ENCODE measurements at regions of chr1 and their contacts with region 1.

Region 1: GRCh38 chr1:172638885-172639831 is 19.7 kb upstream of the FASLG start:
- DNase-seq: peak; percentile 25 to 81 (median 63)
- ATAC-seq: peak; percentile 73
- H3K4me3 ChIP-seq: peak overlapping the region in 1 of 2 experiments; percentile 16
- H3K4me3 Mint-ChIP-seq: peak overlapping the region; percentile 65
- H3K27ac ChIP-seq: peak overlapping the region; percentile 5 to 59
- H3K27ac Mint-ChIP-seq: peak overlapping the region; percentile 85
- H3K4me1 ChIP-seq: peaks cover 48% of the 10 kb centered on the region
- H3K4me1 Mint-ChIP-seq: peaks cover 69% of the 10 kb centered on the region
- H3K27me3 ChIP-seq: no peaks in the 10 kb centered on the region
- H3K27me3 Mint-ChIP-seq: no peaks in the 10 kb centered on the region
- CTCF ChIP-seq: no peak

Region 2: GRCh38 chr1:172609528-172609927 is 29.6 kb before region 1 on chr1:
- CTCF ChIA-PET with region 1: interaction called, 16 read pairs
- POLR2A ChIA-PET with region 1: interaction called, 4 read pairs
- intact Hi-C with region 1: no loop called
- DNase-seq: peak in 2 of 9 experiments; percentile 53 to 62
- ATAC-seq: peak; percentile 78
- H3K4me3 ChIP-seq: no peak overlapping the region
- H3K4me3 Mint-ChIP-seq: no peak overlapping the region
- H3K27ac ChIP-seq: no peak overlapping the region
- H3K27ac Mint-ChIP-seq: no peak overlapping the region
- H3K4me1 ChIP-seq: no peaks in the 10 kb centered on the region
- H3K4me1 Mint-ChIP-seq: peaks cover 4% of the 10 kb centered on the region
- H3K27me3 ChIP-seq: no peaks in the 10 kb centered on the region
- H3K27me3 Mint-ChIP-seq: no peaks in the 10 kb centered on the region
- CTCF ChIP-seq: peak; percentile 74

Region 3: GRCh38 chr1:172654535-172654934 is 15.4 kb after region 1 on chr1:
- CTCF ChIA-PET with region 1: interaction called, 3 read pairs
- POLR2A ChIA-PET with region 1: interaction called, 4 read pairs
- intact Hi-C with region 1: loop called in 1 of 2 experiments (anchors 2 kb)
- DNase-seq: no peak
- ATAC-seq: no peak
- H3K4me3 ChIP-seq: no peak overlapping the region
- H3K4me3 Mint-ChIP-seq: no peak overlapping the region
- H3K27ac ChIP-seq: no peak overlapping the region
- H3K27ac Mint-ChIP-seq: no peak overlapping the region
- H3K4me1 ChIP-seq: peaks cover 16% of the 10 kb centered on the region
- H3K4me1 Mint-ChIP-seq: peaks cover 22% of the 10 kb centered on the region
- H3K27me3 ChIP-seq: peaks cover 0 to 7% of the 10 kb centered on the region in 2 experiments
- H3K27me3 Mint-ChIP-seq: peaks cover 7% of the 10 kb centered on the region
- CTCF ChIP-seq: no peak

Region 4: GRCh38 chr1:172671591-172671990 is 32.4 kb after region 1 on chr1:
- CTCF ChIA-PET with region 1: no interaction called
- POLR2A ChIA-PET with region 1: interaction called, 4 read pairs
- intact Hi-C with region 1: loop called (anchors 1 to 5 kb)
- DNase-seq: no peak
- ATAC-seq: no peak
- H3K4me3 ChIP-seq: no peak overlapping the region
- H3K4me3 Mint-ChIP-seq: no peak overlapping the region
- H3K27ac ChIP-seq: peak overlapping the region in 1 of 2 experiments; percentile 62
- H3K27ac Mint-ChIP-seq: no peak overlapping the region
- H3K4me1 ChIP-seq: peaks cover 54% of the 10 kb centered on the region
- H3K4me1 Mint-ChIP-seq: peaks cover 64% of the 10 kb centered on the region
- H3K27me3 ChIP-seq: no peaks in the 10 kb centered on the region
- H3K27me3 Mint-ChIP-seq: peaks cover 49% of the 10 kb centered on the region
- CTCF ChIP-seq: no peak

Region 5: GRCh38 chr1:172699111-172699510 is 60.0 kb after region 1 on chr1:
- CTCF ChIA-PET with region 1: no interaction called
- POLR2A ChIA-PET with region 1: interaction called, 3 read pairs
- intact Hi-C with region 1: loop called (anchors 1 to 2 kb)
- DNase-seq: peak; percentile 43 to 92 (median 77)
- ATAC-seq: peak; percentile 76
- H3K4me3 ChIP-seq: peak overlapping the region in 1 of 2 experiments; percentile 0
- H3K4me3 Mint-ChIP-seq: peak overlapping the region; percentile 64
- H3K27ac ChIP-seq: peak overlapping the region; percentile 6 to 84
- H3K27ac Mint-ChIP-seq: peak overlapping the region; percentile 91
- H3K4me1 ChIP-seq: peaks cover 76% of the 10 kb centered on the region
- H3K4me1 Mint-ChIP-seq: peaks cover 49% of the 10 kb centered on the region
- H3K27me3 ChIP-seq: no peaks in the 10 kb centered on the region
- H3K27me3 Mint-ChIP-seq: no peaks in the 10 kb centered on the region
- CTCF ChIP-seq: no peak

Region 6: GRCh38 chr1:173002891-173003838 is 364.0 kb after region 1 on chr1:
- CTCF ChIA-PET with region 1: no interaction called
- POLR2A ChIA-PET with region 1: no interaction called
- intact Hi-C with region 1: no loop called
- DNase-seq: no peak
- ATAC-seq: no peak
- H3K4me3 ChIP-seq: no peak overlapping the region
- H3K4me3 Mint-ChIP-seq: no peak overlapping the region
- H3K27ac ChIP-seq: no peak overlapping the region
- H3K27ac Mint-ChIP-seq: no peak overlapping the region
- H3K4me1 ChIP-seq: no peaks in the 10 kb centered on the region
- H3K4me1 Mint-ChIP-seq: peaks cover 8% of the 10 kb centered on the region
- H3K27me3 ChIP-seq: no peaks in the 10 kb centered on the region
- H3K27me3 Mint-ChIP-seq: no peaks in the 10 kb centered on the region
- CTCF ChIP-seq: no peak

Measured in CD8-positive, alpha-beta T cell (primary cell).